Activated CD8-positive, alpha-beta memory T cell treated with anti-CD3 and anti-CD28 coated beads, Interleukin-2, amount 10 ng/mL, durations not matched to agents 7 days and 5 days (primary cell): ENCODE measurements at regions of chr11 and their contacts with region 1.

Region 1: GRCh38 chr11:118659314-118659952 is 20.0 kb downstream of the TREH start:
- DNase-seq: peak; percentile 94
- ATAC-seq: peak; percentile 97
- H3K4me3 Mint-ChIP-seq: no peak overlapping the region
- H3K27ac Mint-ChIP-seq: no peak overlapping the region
- H3K4me1 Mint-ChIP-seq: no peaks in the 10 kb centered on the region
- H3K27me3 Mint-ChIP-seq: no peaks in the 10 kb centered on the region

Region 2: DNA sequence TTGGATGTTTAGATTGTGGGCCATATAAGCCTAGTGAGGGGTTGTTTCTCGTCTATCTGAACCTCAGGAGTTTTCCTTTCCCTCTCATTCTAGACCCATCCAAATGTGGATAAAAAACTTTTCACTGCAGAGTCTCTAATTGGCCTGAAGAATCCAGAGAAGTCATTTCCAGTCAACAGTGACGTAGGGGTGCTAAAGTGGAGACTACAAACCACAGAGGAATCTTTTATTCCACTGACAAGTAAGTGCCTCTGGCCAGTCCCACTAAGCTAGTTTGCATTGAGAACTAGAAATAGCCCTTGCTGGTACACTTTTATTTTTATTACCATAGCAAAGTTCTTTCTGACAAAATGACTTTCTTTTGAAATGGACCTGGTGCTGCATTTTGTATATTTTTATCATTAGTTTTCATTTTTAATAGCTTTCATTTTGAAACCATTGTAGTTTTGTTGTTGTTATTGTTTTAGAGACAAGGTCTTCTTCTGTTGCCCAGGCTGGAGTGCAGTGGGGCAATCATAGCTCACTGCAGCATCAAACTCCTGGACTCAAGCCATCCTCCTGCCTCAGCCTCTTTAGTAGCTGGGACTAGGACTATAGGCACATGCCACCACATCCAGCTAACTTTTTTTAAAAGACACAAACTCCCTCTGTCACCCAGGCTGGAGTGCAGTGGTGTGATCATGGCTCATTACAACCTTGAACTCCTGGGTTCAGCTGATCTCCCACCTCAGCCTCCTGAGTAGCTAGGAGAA is 66.6 kb before region 1 on chr11:
- CTCF ChIA-PET with region 1: interaction called, 15 read pairs
- DNase-seq: no peak
- ATAC-seq: no peak
- H3K4me3 Mint-ChIP-seq: no peak overlapping the region
- H3K27ac Mint-ChIP-seq: no peak overlapping the region
- H3K4me1 Mint-ChIP-seq: peaks cover 22% of the 10 kb centered on the region
- H3K27me3 Mint-ChIP-seq: no peaks in the 10 kb centered on the region

Region 3: DNA sequence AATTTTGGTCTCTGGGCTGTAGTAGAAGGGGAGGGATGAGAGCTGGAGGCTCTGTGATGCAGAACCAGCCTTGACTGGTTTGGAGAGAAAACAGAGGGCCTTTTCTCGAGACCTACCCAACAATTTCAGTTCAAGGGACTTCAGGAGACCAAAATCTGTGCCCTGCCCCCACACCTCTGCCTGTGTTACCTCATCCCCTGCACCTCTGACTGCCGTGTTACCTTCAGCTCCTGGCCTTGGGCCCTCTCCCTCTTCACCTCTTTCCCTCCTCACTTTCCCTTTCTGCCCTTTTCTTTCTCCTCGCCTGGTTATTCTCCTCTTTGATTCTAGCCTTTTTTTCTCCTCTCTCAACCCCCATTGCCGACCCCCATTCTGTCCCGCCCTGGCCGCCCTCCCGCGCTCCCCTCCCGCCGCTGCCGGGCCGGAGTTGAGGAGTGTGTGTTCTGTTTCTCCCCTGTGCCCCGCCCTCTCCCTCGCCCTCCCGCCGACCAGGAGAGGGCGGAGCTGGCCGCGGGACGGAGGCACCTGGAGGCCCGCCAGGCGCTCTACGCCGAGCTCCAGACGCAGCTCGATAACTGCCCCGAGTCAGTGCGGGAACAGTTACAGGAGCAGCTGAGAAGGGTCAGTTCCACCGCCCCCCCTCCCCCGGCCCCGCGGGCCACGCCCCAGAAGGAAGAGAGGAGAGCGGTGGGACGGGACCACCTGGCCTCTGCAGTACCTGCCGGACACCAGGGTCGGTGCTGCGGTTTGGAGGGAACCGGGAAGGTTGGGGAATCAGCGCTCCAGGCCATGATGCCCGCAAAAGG is 24.8 kb before region 1 on chr11:
- CTCF ChIA-PET with region 1: interaction called, 12 read pairs
- DNase-seq: no peak
- ATAC-seq: peak; percentile 72
- H3K4me3 Mint-ChIP-seq: no peak overlapping the region
- H3K27ac Mint-ChIP-seq: no peak overlapping the region
- H3K4me1 Mint-ChIP-seq: no peaks in the 10 kb centered on the region
- H3K27me3 Mint-ChIP-seq: peaks cover 3% of the 10 kb centered on the region